PC-3 (cell line): ENCODE measurements at regions of chr3 and their contacts with region 1.

Region 1: GRCh38 chr3:77660718-77661117 is 620.8 kb downstream of the ROBO2 start:
- DNase-seq: no peak
- ATAC-seq: no peak
- H3K4me3 ChIP-seq: no peak overlapping the region
- H3K27ac ChIP-seq: no peak overlapping the region
- H3K4me1 ChIP-seq: no peaks in the 10 kb centered on the region
- H3K27me3 ChIP-seq: no peaks in the 10 kb centered on the region
- CTCF ChIP-seq: no peak

Region 2: DNA sequence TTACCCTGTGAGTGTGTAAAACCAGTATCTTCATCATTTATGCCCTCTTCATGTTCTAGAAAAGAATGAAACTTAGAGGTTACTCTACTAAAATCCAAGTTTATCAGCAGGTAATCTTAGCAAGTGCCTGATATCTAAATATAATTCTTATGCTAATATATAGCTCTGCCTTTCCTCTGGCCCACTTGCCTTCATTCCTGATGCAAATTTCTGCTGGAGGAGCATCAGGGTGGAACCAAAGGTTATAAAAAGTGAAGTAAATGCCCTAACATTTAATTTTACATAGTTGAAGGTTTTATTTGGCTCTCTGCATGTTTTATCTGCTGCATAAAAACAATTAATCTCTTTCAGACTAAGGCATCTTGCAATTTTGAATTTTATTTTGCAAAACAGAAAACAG is 315.4 kb after region 1 on chr3:
- CTCF ChIA-PET with region 1: no interaction called
- POLR2A ChIA-PET with region 1: interaction called, 15 read pairs
- intact Hi-C with region 1: no loop called
- DNase-seq: no peak
- ATAC-seq: no peak
- H3K4me3 ChIP-seq: no peak overlapping the region
- H3K27ac ChIP-seq: no peak overlapping the region
- H3K4me1 ChIP-seq: no peaks in the 10 kb centered on the region
- H3K27me3 ChIP-seq: no peaks in the 10 kb centered on the region
- CTCF ChIP-seq: no peak